ENCODE measurements at regions of chr2 and their contacts with region 1.

Region 1: GRCh38 chr2:181305301-181306123 is 151.7 kb upstream of the ITGA4 start:
- DNase-seq: peak; percentile 96
- ATAC-seq: peak; percentile 80
- H3K4me3 ChIP-seq: no peak overlapping the region
- H3K27ac ChIP-seq: peak overlapping the region; percentile 99
- H3K4me1 ChIP-seq: peaks cover 49% of the 10 kb centered on the region
- H3K27me3 ChIP-seq: no peaks in the 10 kb centered on the region
- CTCF ChIP-seq: no peak
- EP300 ChIP-seq: peak; percentile 16 to 82; a peak in 3 of 4 replicates
- POLR2A ChIP-seq: peak; percentile 75
- RAD21 ChIP-seq: 0 out of 2 replicates have a peak, but pooled peaks have one; percentile 12

Region 2: GRCh38 chr2:180846756-180847472 is 458.6 kb before region 1 on chr2:
- CTCF ChIA-PET with region 1: no interaction called
- POLR2A ChIA-PET with region 1: no interaction called
- RAD21 ChIA-PET with region 1: no interaction called
- SMC1A ChIA-PET with region 1: no interaction called
- in situ Hi-C with region 1: no loop called
- intact Hi-C with region 1: no loop called
- DNase-seq: no peak
- ATAC-seq: no peak
- H3K4me3 ChIP-seq: no peak overlapping the region
- H3K27ac ChIP-seq: no peak overlapping the region
- H3K4me1 ChIP-seq: no peaks in the 10 kb centered on the region
- H3K27me3 ChIP-seq: no peaks in the 10 kb centered on the region
- CTCF ChIP-seq: no peak
- EP300 ChIP-seq: no peak
- POLR2A ChIP-seq: no peak
- RAD21 ChIP-seq: no peak

Region 3: DNA sequence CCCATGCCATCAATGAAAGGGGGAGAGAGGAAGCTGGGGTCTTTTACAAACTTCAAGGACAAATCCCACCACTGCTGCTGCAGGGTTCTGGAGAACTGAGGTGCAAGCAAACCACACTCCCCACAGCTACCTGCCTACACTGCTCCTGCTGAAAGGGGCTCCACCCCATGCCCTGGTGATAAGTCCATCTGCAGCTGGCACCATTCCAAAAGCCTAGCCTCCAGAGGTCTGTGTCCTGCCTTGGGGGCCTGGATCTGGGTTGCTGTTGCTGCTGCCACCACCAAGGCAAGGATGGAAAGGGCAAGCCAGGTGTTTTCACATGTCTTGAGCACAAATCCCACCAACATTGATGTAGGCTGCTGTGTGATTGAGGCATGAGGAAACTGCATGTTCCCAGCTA is 422.6 kb before region 1 on chr2:
- CTCF ChIA-PET with region 1: no interaction called
- POLR2A ChIA-PET with region 1: no interaction called
- RAD21 ChIA-PET with region 1: no interaction called
- SMC1A ChIA-PET with region 1: no interaction called
- in situ Hi-C with region 1: no loop called
- intact Hi-C with region 1: no loop called
- DNase-seq: no peak
- ATAC-seq: no peak
- H3K4me3 ChIP-seq: no peak overlapping the region
- H3K27ac ChIP-seq: no peak overlapping the region
- H3K4me1 ChIP-seq: no peaks in the 10 kb centered on the region
- H3K27me3 ChIP-seq: no peaks in the 10 kb centered on the region
- CTCF ChIP-seq: no peak
- EP300 ChIP-seq: no peak
- POLR2A ChIP-seq: no peak
- RAD21 ChIP-seq: no peak

Region 4: GRCh38 chr2:180980106-180980942 is 325.2 kb before region 1 on chr2 and contains the start of gene UBE2E3:
- CTCF ChIA-PET with region 1: no interaction called
- POLR2A ChIA-PET with region 1: no interaction called
- RAD21 ChIA-PET with region 1: no interaction called
- SMC1A ChIA-PET with region 1: interaction called, 4 read pairs
- in situ Hi-C with region 1: no loop called
- intact Hi-C with region 1: loop called (anchors 5 kb)
- DNase-seq: no peak
- ATAC-seq: peak; percentile 87
- H3K4me3 ChIP-seq: peak within 1 kb of the TSS; percentile 76
- H3K27ac ChIP-seq: 0 out of 2 replicates have a peak within 1 kb of the TSS, but pooled peaks have one; percentile 10
- H3K4me1 ChIP-seq: peaks cover 8% of the 10 kb centered on the region
- H3K27me3 ChIP-seq: no peaks in the 10 kb centered on the region; a peak in 1 of 4 replicates
- CTCF ChIP-seq: peak; percentile 55 to 82 (median 64)
- EP300 ChIP-seq: no peak
- POLR2A ChIP-seq: peak; percentile 70; the same call in 1 of the 2 replicates
- RAD21 ChIP-seq: peak; percentile 50
- polyA plus RNA-seq, gene UBE2E3: 14.9 to 22.7 TPM

Region 5: GRCh38 chr2:181235683-181236459 is 69.6 kb before region 1 on chr2:
- CTCF ChIA-PET with region 1: interaction called, 6 read pairs
- POLR2A ChIA-PET with region 1: no interaction called
- RAD21 ChIA-PET with region 1: interaction called, 4 read pairs
- SMC1A ChIA-PET with region 1: interaction called, 7 read pairs
- in situ Hi-C with region 1: no loop called
- intact Hi-C with region 1: loop called (anchors 2 kb)
- DNase-seq: peak; percentile 82
- ATAC-seq: peak; percentile 92
- H3K4me3 ChIP-seq: no peak overlapping the region
- H3K27ac ChIP-seq: no peak overlapping the region
- H3K4me1 ChIP-seq: peaks cover 18% of the 10 kb centered on the region
- H3K27me3 ChIP-seq: no peaks in the 10 kb centered on the region; a peak in 1 of 4 replicates
- CTCF ChIP-seq: no peak
- EP300 ChIP-seq: peak; percentile 84 to 91; a peak in 3 of 4 replicates
- POLR2A ChIP-seq: no peak
- RAD21 ChIP-seq: peak; percentile 32; the same call in 1 of the 2 replicates

Region 6: DNA sequence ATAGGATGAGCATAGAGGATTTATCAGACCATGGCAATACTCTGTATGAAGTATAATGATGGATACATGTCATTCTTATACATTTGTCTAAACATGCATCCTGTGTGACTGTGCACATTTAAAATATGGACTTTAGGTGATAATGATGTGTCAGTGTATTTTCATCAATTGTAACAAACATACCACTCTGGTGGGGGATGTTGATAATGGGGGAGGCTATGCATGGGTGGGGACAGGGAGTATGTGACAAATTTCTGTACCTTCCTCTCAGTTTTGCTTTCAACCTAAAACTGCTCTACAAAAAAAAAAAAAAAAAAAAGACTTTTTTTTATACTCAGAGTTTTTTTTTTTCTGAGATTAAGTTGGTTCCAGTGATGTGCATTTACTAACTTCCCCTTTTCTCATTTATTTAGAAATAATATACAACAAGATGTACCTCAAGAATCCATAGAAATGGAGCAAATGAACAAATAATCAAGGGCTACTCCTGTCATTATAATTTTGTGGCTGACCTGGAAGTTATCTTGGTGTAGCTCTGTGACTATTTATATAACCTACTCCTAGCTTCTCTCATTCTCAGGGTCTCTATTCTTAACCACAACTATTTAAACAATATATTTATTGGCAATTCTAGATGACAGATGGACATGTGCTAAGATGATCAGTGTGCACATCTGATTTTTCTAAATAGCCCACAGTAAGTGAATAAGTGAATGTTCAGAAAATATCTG is 42.8 kb after region 1 on chr2:
- CTCF ChIA-PET with region 1: interaction called, 10 read pairs
- POLR2A ChIA-PET with region 1: interaction called, 5 read pairs
- RAD21 ChIA-PET with region 1: interaction called, 26 read pairs
- SMC1A ChIA-PET with region 1: interaction called, 9 read pairs
- in situ Hi-C with region 1: no loop called
- intact Hi-C with region 1: loop called (anchors 2 kb)
- DNase-seq: peak; percentile 66
- ATAC-seq: peak; percentile 96
- H3K4me3 ChIP-seq: no peak overlapping the region
- H3K27ac ChIP-seq: peak overlapping the region; percentile 68
- H3K4me1 ChIP-seq: peaks cover 12% of the 10 kb centered on the region; the same call in 1 of the 2 replicates
- H3K27me3 ChIP-seq: no peaks in the 10 kb centered on the region
- CTCF ChIP-seq: no peak
- EP300 ChIP-seq: peak; percentile 50 to 54; a peak in 1 of 4 replicates
- POLR2A ChIP-seq: no peak
- RAD21 ChIP-seq: no peak

Region 7: GRCh38 chr2:181393472-181393871 is 88.0 kb after region 1 on chr2:
- CTCF ChIA-PET with region 1: interaction called, 3 read pairs
- POLR2A ChIA-PET with region 1: interaction called, 3 read pairs
- RAD21 ChIA-PET with region 1: interaction called, 8 read pairs
- SMC1A ChIA-PET with region 1: interaction called, 46 read pairs
- in situ Hi-C with region 1: no loop called
- intact Hi-C with region 1: loop called (anchors 5 kb)
- DNase-seq: no peak
- ATAC-seq: peak; percentile 77
- H3K4me3 ChIP-seq: no peak overlapping the region; the same call in 1 of the 2 replicates
- H3K27ac ChIP-seq: no peak overlapping the region
- H3K4me1 ChIP-seq: peaks cover 2% of the 10 kb centered on the region; the same call in 1 of the 2 replicates
- H3K27me3 ChIP-seq: no peaks in the 10 kb centered on the region
- CTCF ChIP-seq: no peak
- EP300 ChIP-seq: no peak
- POLR2A ChIP-seq: no peak
- RAD21 ChIP-seq: no peak

Region 8: DNA sequence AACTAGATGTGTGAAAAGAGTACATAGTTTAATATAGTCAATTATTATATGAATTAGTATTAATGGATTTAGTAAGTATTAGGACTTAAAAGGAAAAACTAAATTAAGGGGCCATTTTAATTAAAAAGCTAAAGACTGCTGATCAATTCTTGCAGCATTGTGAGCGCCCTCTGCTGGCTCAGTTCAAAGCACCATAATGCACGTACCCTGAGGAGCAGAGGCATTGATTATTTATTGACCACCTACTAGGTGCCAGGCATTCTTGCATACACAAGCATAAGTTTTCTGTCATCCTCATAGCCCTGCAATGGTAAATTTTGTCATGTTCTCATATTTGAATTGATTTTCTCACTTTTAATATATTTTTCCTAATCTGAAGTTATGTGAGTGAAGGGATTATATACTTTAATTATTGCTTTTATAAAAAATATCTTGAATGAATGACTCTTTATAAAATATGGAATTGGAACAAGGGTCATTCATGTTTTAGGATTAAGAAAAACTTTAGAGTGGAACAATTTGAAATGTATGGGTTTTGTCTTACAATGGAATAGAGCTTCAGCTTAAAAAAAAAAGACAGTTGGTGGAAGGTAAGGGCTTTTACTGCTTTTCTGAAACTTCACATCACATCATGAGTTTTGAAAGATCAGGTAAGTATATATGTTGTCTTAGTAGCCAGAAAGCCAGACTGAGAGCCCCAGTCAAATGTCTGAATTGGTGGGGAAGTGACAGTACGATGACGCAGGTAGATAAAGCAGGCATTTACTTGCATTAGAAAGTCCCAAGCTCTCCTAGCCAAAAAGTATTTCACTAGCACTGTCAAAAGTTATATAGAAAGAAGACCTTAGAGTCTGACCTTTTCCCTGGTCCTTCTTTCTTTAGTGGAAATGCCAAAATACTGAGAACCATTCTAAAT is 161.4 kb after region 1 on chr2:
- CTCF ChIA-PET with region 1: interaction called, 235 read pairs
- POLR2A ChIA-PET with region 1: interaction called, 26 read pairs
- RAD21 ChIA-PET with region 1: interaction called, 340 read pairs
- SMC1A ChIA-PET with region 1: interaction called, 313 read pairs
- in situ Hi-C with region 1: no loop called
- intact Hi-C with region 1: no loop called
- DNase-seq: no peak
- ATAC-seq: peak; percentile 66
- H3K4me3 ChIP-seq: no peak overlapping the region
- H3K27ac ChIP-seq: no peak overlapping the region
- H3K4me1 ChIP-seq: peaks cover 31% of the 10 kb centered on the region
- H3K27me3 ChIP-seq: no peaks in the 10 kb centered on the region
- CTCF ChIP-seq: peak; percentile 74 to 81 (median 79)
- EP300 ChIP-seq: no peak
- POLR2A ChIP-seq: no peak
- RAD21 ChIP-seq: peak; percentile 70

Region 9: DNA sequence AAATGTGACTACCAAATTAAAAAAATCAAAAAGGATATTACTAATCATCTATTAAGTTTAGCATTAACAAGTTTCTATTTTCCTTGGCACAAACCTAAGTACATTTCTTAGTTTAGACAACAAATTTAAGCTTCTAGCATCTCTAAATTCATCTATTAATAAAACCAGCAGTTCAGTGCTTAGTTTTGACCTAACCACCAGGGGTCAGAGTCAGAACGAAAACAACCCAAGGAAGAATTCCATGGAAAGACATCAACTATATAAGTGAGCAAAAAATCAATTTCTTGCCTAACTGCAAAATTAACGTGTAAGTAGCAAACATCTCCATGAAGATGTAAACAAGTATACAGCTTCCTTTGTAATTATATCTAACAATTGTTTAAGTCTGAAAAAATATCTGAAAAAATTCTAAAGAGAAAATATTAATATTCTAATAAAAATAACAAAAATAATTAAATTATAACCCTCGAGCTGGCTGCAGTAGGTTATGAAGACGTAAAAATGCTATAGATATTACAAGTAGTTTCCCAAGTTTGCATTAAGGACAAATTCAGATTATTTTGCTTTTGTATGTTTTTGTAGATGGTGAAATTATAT is 267.7 kb after region 1 on chr2:
- CTCF ChIA-PET with region 1: interaction called, 16 read pairs
- POLR2A ChIA-PET with region 1: no interaction called
- RAD21 ChIA-PET with region 1: interaction called, 16 read pairs
- SMC1A ChIA-PET with region 1: interaction called, 22 read pairs
- in situ Hi-C with region 1: no loop called
- intact Hi-C with region 1: no loop called
- DNase-seq: no peak
- ATAC-seq: no peak
- H3K4me3 ChIP-seq: no peak overlapping the region
- H3K27ac ChIP-seq: no peak overlapping the region
- H3K4me1 ChIP-seq: no peaks in the 10 kb centered on the region
- H3K27me3 ChIP-seq: peaks cover 2 to 3% of the 10 kb centered on the region in 2 experiments; a peak in 2 of 4 replicates
- CTCF ChIP-seq: peak; percentile 20 to 48 (median 37); a peak in 5 of 6 replicates
- EP300 ChIP-seq: no peak
- POLR2A ChIP-seq: no peak
- RAD21 ChIP-seq: peak; percentile 47

Measured in GM12878 (cell line).